Cardiac septum (tissue), 1 donor: ENCODE measurements at regions of chr11 and their contacts with region 1.

Region 1: GRCh38 chr11:44029977-44030911 is 17.5 kb upstream of the ACCSL start:
- DNase-seq: peak; percentile 85

Region 2: GRCh38 chr11:43825217-43825816 is 204.9 kb before region 1 on chr11:
- intact Hi-C with region 1: no loop called
- DNase-seq: no peak

Region 3: GRCh38 chr11:43920598-43921419 is 109.4 kb before region 1 on chr11:
- intact Hi-C with region 1: loop called (anchors 5 kb)
- DNase-seq: no peak

Region 4: GRCh38 chr11:44005063-44005701 is 25.1 kb before region 1 on chr11:
- intact Hi-C with region 1: no loop called
- DNase-seq: peak; percentile 47